ENCODE measurements at regions of chr15 and their contacts with region 1.

Region 1: GRCh38 chr15:95247099-95247984 is 1016.0 kb downstream of the MCTP2 start:
- DNase-seq: peak; percentile 73
- H3K4me3 Mint-ChIP-seq: peak overlapping the region; percentile 43
- H3K27ac Mint-ChIP-seq: peak overlapping the region; percentile 91
- H3K4me1 Mint-ChIP-seq: peaks cover 28% of the 10 kb centered on the region
- H3K27me3 Mint-ChIP-seq: no peaks in the 10 kb centered on the region
- CTCF ChIP-seq: no peak

Region 2: GRCh38 chr15:93603550-93603949 is 1643.8 kb before region 1 on chr15:
- CTCF ChIA-PET with region 1: interaction called, 12 read pairs
- intact Hi-C with region 1: no loop called
- DNase-seq: no peak
- H3K4me3 Mint-ChIP-seq: no peak overlapping the region
- H3K27ac Mint-ChIP-seq: no peak overlapping the region
- H3K4me1 Mint-ChIP-seq: no peaks in the 10 kb centered on the region
- H3K27me3 Mint-ChIP-seq: peaks cover 14% of the 10 kb centered on the region
- CTCF ChIP-seq: no peak

Region 3: GRCh38 chr15:95196176-95196801 is 51.1 kb before region 1 on chr15:
- CTCF ChIA-PET with region 1: no interaction called
- intact Hi-C with region 1: loop called (anchors 5 kb)
- DNase-seq: peak; percentile 53
- H3K4me3 Mint-ChIP-seq: peak overlapping the region; percentile 80
- H3K27ac Mint-ChIP-seq: peak overlapping the region; percentile 78
- H3K4me1 Mint-ChIP-seq: peaks cover 16% of the 10 kb centered on the region
- H3K27me3 Mint-ChIP-seq: no peaks in the 10 kb centered on the region
- CTCF ChIP-seq: no peak

Measured in Calu3 (cell line).